Activated CD4-positive, alpha-beta T cell treated with anti-CD3 and anti-CD28 coated beads for 36 hours (primary cell): ENCODE measurements at regions of chrX and their contacts with region 1.

Region 1: DNA sequence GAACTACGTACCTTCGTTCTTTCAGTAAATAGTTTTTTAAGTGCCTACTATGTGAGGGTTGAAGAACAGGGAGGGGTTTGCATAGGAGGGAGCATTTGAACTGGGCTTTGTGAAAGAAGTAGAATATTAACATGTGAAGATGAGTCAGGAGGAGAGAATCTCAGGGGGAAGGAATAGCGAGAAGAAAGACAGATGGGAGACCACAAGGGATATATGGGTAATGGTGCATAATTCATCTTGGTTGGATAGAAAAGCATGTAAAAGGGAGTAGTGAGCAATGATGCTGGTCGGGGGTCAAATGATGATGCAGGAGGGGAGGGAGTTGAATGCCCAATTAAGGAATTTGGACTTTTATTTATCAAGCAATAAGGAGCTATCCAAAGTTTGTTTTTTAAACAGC is 52.7 kb downstream of the TMEM164 start:
- DNase-seq: no peak
- ATAC-seq: no peak
- H3K4me3 Mint-ChIP-seq: no peak overlapping the region
- H3K27ac Mint-ChIP-seq: no peak overlapping the region
- H3K4me1 Mint-ChIP-seq: peaks cover 14% of the 10 kb centered on the region
- H3K27me3 Mint-ChIP-seq: no peaks in the 10 kb centered on the region

Region 2: GRCh38 chrX:108369702-108370101 is 1685.9 kb before region 1 on chrX:
- CTCF ChIA-PET with region 1: no interaction called
- POLR2A ChIA-PET with region 1: no interaction called
- intact Hi-C with region 1: no loop called
- DNase-seq: no peak
- ATAC-seq: no peak
- H3K4me3 Mint-ChIP-seq: no peak overlapping the region
- H3K27ac Mint-ChIP-seq: no peak overlapping the region
- H3K4me1 Mint-ChIP-seq: no peaks in the 10 kb centered on the region
- H3K27me3 Mint-ChIP-seq: peaks cover 2% of the 10 kb centered on the region

Region 3: DNA sequence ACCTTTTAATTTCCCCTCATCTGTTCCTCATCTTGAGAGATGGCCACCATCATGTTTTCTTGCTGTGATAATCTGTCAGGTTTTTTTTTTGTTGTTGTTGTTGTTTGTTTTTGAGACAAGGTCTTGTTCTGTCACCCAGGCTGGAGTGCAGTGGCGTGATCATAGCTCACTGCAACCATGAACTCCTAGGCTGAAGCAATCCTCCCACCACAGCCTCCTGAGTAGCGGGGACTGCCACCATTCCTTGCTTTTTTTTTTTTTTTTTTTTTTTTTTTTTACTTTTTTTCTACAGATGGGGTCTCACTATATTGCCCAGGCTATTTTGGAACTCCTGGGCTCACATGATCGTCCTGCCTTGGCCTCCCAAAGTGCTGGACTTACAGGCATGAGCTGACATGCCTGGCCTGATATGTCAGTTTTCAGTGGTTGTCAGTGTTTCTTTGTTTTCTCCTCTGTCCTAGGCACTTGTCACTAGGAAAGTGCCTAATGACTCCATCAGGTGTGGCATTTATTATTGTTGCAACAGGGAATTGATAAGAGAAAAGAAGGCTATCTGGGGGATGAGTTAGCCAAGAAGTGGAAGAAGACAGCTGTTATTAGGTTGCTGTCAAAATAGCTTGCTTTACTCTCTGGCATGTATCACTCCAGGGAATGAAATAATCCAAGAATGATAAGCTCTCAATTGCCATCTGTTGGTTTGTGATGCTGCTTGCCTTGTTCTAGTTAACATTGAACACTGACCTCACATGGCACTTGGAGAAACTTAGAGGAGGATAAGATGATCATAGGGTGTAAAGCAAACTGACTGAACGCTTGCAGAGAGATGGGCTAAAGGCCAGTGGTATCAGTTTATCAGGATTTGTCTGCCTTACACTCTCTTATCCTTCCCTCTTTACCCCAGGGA is 11.0 kb before region 1 on chrX:
- CTCF ChIA-PET with region 1: interaction called, 4 read pairs
- POLR2A ChIA-PET with region 1: no interaction called
- intact Hi-C with region 1: loop called in 1 of 2 experiments (anchors 1 kb)
- DNase-seq: no peak
- ATAC-seq: no peak
- H3K4me3 Mint-ChIP-seq: no peak overlapping the region
- H3K27ac Mint-ChIP-seq: no peak overlapping the region
- H3K4me1 Mint-ChIP-seq: peaks cover 19% of the 10 kb centered on the region
- H3K27me3 Mint-ChIP-seq: no peaks in the 10 kb centered on the region